Adrenal gland (tissue), 19 donors: ENCODE measurements at regions of chr6 and their contacts with region 1.

Region 1: DNA sequence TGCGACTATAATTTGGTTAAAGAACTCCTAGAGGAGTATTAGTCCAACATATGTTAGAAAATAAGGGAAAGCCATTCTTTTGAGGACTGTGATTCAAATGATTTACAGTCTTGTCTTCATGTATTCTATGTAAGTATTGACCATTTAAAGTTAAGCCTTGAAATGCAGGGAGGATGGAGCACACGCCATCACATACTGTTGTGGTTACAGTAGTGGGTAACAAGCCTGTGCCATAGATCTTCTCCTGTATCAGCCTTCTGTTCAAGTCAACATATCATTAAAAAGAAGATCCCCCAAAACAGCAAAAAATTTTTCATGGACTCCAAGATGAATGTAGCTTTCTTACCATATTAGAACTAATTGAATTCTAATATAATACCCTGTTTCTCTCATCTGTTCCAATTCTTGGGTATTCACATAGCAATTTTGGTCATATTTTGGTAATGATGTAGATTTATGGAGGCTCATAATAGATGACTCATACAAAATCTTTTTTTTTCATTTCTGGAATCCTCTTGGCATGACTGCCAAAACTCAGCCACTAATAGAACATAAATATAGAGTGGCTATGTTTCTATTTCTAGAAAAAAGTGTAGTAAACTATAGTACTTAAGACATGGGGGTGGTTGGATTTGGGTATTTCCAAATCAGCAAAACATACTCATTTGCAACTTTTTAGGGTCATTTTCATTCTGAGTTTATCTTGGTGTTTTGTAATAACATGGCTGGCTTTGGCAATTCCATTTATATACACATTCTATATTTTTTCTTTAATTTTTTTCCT is 413.5 kb downstream of the BCKDHB start:
- DNase-seq: no peak
- H3K4me3 ChIP-seq: no peak overlapping the region
- H3K27ac ChIP-seq: no peak overlapping the region
- H3K4me1 ChIP-seq: no peaks in the 10 kb centered on the region
- H3K27me3 ChIP-seq: no peaks in the 10 kb centered on the region
- CTCF ChIP-seq: no peak
- POLR2A ChIP-seq: no peak

Region 2: GRCh38 chr6:80725156-80725930 is 205.3 kb after region 1 on chr6:
- intact Hi-C with region 1: loop called in 1 of 2 experiments (anchors 10 kb)
- DNase-seq: no peak
- H3K4me3 ChIP-seq: no peak overlapping the region
- H3K27ac ChIP-seq: no peak overlapping the region
- H3K4me1 ChIP-seq: no peaks in the 10 kb centered on the region
- H3K27me3 ChIP-seq: no peaks in the 10 kb centered on the region
- CTCF ChIP-seq: no peak
- POLR2A ChIP-seq: no peak